CD4-positive, alpha-beta T cell (primary cell): ENCODE measurements at regions of chr17 and their contacts with region 1.

Region 1: GRCh38 chr17:65401561-65401960 is 159.9 kb downstream of the AXIN2 start:
- DNase-seq: peak in 1 of 14 experiments; percentile 3
- ATAC-seq: no peak
- H3K4me3 ChIP-seq: no peak overlapping the region
- H3K4me3 Mint-ChIP-seq: no peak overlapping the region
- H3K27ac ChIP-seq: no peak overlapping the region
- H3K27ac Mint-ChIP-seq: no peak overlapping the region
- H3K4me1 ChIP-seq: no peaks in the 10 kb centered on the region
- H3K4me1 Mint-ChIP-seq: peaks cover 11% of the 10 kb centered on the region
- H3K27me3 ChIP-seq: no peaks in the 10 kb centered on the region
- H3K27me3 Mint-ChIP-seq: peaks cover 7% of the 10 kb centered on the region
- CTCF ChIP-seq: no peak

Region 2: GRCh38 chr17:65374966-65375365 is 26.6 kb before region 1 on chr17:
- CTCF ChIA-PET with region 1: no interaction called
- POLR2A ChIA-PET with region 1: no interaction called
- intact Hi-C with region 1: loop called in 1 of 2 experiments (anchors 1 kb)
- DNase-seq: no peak
- ATAC-seq: no peak
- H3K4me3 ChIP-seq: no peak overlapping the region
- H3K4me3 Mint-ChIP-seq: no peak overlapping the region
- H3K27ac ChIP-seq: no peak overlapping the region
- H3K27ac Mint-ChIP-seq: no peak overlapping the region
- H3K4me1 ChIP-seq: peaks cover 9% of the 10 kb centered on the region
- H3K4me1 Mint-ChIP-seq: no peaks in the 10 kb centered on the region
- H3K27me3 ChIP-seq: peaks cover 0 to 6% of the 10 kb centered on the region in 2 experiments
- H3K27me3 Mint-ChIP-seq: peaks cover 13% of the 10 kb centered on the region
- CTCF ChIP-seq: no peak

Region 3: DNA sequence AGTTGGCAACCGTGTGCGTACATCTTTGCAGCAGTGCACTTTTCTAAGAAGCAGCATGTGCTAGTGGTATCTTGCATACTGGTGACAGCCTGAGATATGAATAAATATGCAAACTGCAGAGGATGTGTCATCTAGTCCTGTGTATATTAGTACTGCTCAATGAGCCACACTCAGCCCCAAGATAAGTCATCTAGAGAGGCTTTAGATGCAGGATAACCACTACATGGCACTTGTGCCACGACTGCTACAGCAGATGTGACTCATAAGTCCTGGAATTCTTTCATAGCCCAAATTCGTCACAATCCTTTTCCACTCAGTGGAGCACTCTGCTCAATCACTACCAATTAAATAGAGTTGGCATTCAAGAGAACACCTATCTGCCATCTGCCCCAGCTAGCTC is 11.6 kb before region 1 on chr17:
- CTCF ChIA-PET with region 1: no interaction called
- POLR2A ChIA-PET with region 1: no interaction called
- intact Hi-C with region 1: no loop called
- DNase-seq: no peak
- ATAC-seq: no peak
- H3K4me3 ChIP-seq: no peak overlapping the region
- H3K4me3 Mint-ChIP-seq: no peak overlapping the region
- H3K27ac ChIP-seq: no peak overlapping the region
- H3K27ac Mint-ChIP-seq: no peak overlapping the region
- H3K4me1 ChIP-seq: peaks cover 6% of the 10 kb centered on the region
- H3K4me1 Mint-ChIP-seq: peaks cover 19% of the 10 kb centered on the region
- H3K27me3 ChIP-seq: no peaks in the 10 kb centered on the region
- H3K27me3 Mint-ChIP-seq: no peaks in the 10 kb centered on the region
- CTCF ChIP-seq: no peak

Region 4: GRCh38 chr17:65418628-65419027 is 17.1 kb after region 1 on chr17:
- CTCF ChIA-PET with region 1: no interaction called
- POLR2A ChIA-PET with region 1: no interaction called
- intact Hi-C with region 1: no loop called
- DNase-seq: no peak
- ATAC-seq: no peak
- H3K4me3 ChIP-seq: no peak overlapping the region
- H3K4me3 Mint-ChIP-seq: no peak overlapping the region
- H3K27ac ChIP-seq: no peak overlapping the region
- H3K27ac Mint-ChIP-seq: no peak overlapping the region
- H3K4me1 ChIP-seq: no peaks in the 10 kb centered on the region
- H3K4me1 Mint-ChIP-seq: no peaks in the 10 kb centered on the region
- H3K27me3 ChIP-seq: no peaks in the 10 kb centered on the region
- H3K27me3 Mint-ChIP-seq: peaks cover 11% of the 10 kb centered on the region
- CTCF ChIP-seq: no peak

Region 5: DNA sequence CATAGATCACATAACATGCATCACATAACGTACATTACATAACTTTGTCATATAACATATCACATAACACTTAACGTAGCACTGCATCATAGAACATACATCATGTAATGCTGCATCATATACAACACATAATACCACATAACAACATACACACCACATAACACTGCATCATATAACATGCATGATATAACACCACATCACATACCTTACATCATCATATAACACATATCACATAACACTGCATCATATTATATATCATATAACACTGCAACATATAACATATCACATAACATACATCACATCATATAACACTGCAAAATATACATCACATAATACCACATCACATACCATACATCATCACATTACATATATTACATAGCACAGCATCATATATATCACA is 76.1 kb after region 1 on chr17:
- CTCF ChIA-PET with region 1: no interaction called
- POLR2A ChIA-PET with region 1: no interaction called
- intact Hi-C with region 1: loop called in 1 of 2 experiments (anchors 1 kb)
- DNase-seq: no peak
- ATAC-seq: no peak
- H3K4me3 ChIP-seq: no peak overlapping the region
- H3K4me3 Mint-ChIP-seq: no peak overlapping the region
- H3K27ac ChIP-seq: no peak overlapping the region
- H3K27ac Mint-ChIP-seq: no peak overlapping the region
- H3K4me1 ChIP-seq: no peaks in the 10 kb centered on the region
- H3K4me1 Mint-ChIP-seq: no peaks in the 10 kb centered on the region
- H3K27me3 ChIP-seq: peaks cover 0 to 2% of the 10 kb centered on the region in 2 experiments
- H3K27me3 Mint-ChIP-seq: peaks cover 5% of the 10 kb centered on the region
- CTCF ChIP-seq: no peak